ENCODE measurements at regions of chr3 and their contacts with region 1.

Region 1: DNA sequence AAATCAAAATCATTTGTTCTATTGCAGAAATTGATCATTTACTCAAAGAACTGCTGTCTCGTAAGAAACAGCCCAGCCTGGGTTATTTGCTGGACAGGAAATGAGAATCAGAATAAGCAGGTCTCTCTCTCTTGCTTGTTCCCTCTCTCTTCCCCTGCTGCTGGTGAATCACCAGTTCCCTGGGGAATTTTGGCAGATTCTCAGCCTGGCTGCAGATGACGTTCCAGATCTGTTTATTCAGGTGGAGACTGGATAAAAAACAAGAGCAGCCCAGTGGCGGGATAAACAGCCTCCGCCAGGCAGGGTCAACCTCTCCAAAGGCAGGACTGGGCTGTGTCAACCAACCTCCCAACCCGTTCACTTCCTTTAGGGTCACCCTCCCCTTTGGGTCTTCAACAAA is 72.1 kb downstream of the LRIG1 start:
- DNase-seq: peak in 1 of 2 donors; percentile 78
- ATAC-seq: peak; percentile 60

Region 2: GRCh38 chr3:66499881-66500575 is 71.3 kb after region 1 on chr3:
- intact Hi-C with region 1: loop called in 1 of 2 experiments (anchors 10 kb)
- DNase-seq: peak in 1 of 2 donors; percentile 66
- ATAC-seq: peak; percentile 6